ENCODE measurements at regions of chr5 and their contacts with region 1.

Region 1: DNA sequence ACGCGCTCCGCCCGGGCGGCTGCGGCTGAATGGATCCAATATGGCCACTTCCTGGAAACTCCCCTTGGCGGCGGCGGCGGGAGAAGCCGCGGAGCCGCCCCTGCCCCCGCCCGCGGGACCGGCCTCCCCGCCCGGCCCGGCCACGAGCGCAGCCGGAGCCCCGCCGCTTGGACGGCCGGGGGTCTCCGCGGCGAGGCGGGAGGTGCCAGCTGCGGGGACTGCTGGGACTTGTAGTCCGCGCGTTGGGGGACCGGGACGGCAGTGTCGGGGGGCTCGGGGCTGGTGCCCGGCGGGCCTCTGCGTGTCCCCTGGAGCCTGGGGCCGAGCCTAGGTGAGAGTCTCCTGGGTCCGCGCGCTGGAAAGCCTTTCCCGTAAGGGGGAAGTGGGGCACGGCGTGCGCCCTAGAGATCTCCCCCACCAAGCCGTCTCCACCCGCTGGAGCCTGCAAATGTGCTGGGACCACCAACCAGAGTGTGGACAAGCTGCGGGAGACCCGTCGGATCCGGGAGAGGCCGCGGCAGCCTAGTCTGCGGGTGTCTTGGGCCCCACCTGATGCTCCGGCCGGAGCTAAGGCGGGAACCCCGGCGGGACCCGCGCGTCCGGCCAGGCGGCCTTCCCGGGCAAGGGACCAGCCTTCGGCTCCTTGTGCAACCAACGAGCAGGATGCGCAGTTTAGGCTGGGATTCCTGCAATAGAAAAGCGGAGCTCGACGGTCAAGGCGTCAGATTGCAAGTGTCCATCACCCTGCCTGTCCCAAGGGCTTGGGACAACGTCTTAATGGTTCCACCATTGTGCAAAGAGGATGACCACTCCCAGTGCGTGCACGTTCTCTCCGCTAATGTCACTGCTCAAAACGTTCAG is at the start of gene SEPTIN8:
- DNase-seq: peak; percentile 90
- H3K4me3 ChIP-seq: peak within 1 kb of the TSS; percentile 75 to 85
- H3K27ac ChIP-seq: no peak within 1 kb of the TSS; a peak in 1 of 4 replicates
- H3K4me1 ChIP-seq: peaks cover 19 to 42% of the 10 kb centered on the region in 2 experiments; a peak in 2 of 4 replicates
- H3K27me3 ChIP-seq: no peaks in the 10 kb centered on the region
- CTCF ChIP-seq: no peak
- EP300 ChIP-seq: no peak
- RAD21 ChIP-seq: no peak
- polyA plus RNA-seq, gene SEPTIN8: 54.9 and 57.6 TPM in 2 replicates

Region 2: GRCh38 chr5:132746954-132747615 is 30.4 kb before region 1 on chr5 and contains the start of gene CCNI2:
- CTCF ChIA-PET with region 1: interaction called, 13 read pairs
- POLR2A ChIA-PET with region 1: no interaction called
- DNase-seq: peak; percentile 87
- H3K4me3 ChIP-seq: peak within 1 kb of the TSS; percentile 49 to 51; a peak in 3 of 4 replicates
- H3K27ac ChIP-seq: no peak within 1 kb of the TSS
- H3K4me1 ChIP-seq: no peaks in the 10 kb centered on the region; a peak in 1 of 4 replicates
- H3K27me3 ChIP-seq: no peaks in the 10 kb centered on the region
- CTCF ChIP-seq: peak; percentile 54
- EP300 ChIP-seq: no peak
- RAD21 ChIP-seq: peak; percentile 53
- polyA plus RNA-seq, gene CCNI2: 0.05 and 0.34 TPM in 2 replicates